Prostate gland (tissue), 2 donors: ENCODE measurements at regions of chr6 and their contacts with region 1.

Region 1: DNA sequence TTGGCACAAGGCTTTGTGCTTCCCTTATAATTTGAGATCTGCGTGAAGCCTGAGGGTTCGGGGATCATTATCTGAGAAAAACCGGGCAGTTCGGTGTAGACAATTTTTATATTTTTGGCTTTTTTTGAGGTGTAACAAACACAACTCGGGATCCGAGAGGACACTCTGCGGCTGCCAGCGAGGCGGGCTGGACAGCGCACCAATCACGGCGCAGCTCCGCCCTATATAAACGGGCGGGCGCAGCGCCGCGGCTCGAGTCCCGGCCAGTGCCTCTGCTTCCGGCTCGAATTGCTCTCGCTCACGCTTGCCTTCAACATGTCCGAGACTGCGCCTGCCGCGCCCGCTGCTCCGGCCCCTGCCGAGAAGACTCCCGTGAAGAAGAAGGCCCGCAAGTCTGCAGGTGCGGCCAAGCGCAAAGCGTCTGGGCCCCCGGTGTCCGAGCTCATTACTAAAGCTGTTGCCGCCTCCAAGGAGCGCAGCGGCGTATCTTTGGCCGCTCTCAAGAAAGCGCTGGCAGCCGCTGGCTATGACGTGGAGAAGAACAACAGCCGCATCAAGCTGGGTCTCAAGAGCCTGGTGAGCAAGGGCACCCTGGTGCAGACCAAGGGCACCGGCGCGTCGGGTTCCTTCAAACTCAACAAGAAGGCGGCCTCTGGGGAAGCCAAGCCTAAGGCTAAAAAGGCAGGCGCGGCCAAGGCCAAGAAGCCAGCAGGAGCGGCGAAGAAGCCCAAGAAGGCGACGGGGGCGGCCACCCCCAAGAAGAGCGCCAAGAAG is 69.0 kb downstream of the HFE start:
- DNase-seq: peak; percentile 93
- H3K4me3 ChIP-seq: peak overlapping the region; percentile 81 to 83
- H3K27ac ChIP-seq: peak overlapping the region; percentile 95 to 96
- H3K4me1 ChIP-seq: no peaks in the 10 kb centered on the region
- H3K27me3 ChIP-seq: no peaks in the 10 kb centered on the region
- CTCF ChIP-seq: peak in 1 of 4 experiments; percentile 3
- POLR2A ChIP-seq: peak; percentile 97

Region 2: DNA sequence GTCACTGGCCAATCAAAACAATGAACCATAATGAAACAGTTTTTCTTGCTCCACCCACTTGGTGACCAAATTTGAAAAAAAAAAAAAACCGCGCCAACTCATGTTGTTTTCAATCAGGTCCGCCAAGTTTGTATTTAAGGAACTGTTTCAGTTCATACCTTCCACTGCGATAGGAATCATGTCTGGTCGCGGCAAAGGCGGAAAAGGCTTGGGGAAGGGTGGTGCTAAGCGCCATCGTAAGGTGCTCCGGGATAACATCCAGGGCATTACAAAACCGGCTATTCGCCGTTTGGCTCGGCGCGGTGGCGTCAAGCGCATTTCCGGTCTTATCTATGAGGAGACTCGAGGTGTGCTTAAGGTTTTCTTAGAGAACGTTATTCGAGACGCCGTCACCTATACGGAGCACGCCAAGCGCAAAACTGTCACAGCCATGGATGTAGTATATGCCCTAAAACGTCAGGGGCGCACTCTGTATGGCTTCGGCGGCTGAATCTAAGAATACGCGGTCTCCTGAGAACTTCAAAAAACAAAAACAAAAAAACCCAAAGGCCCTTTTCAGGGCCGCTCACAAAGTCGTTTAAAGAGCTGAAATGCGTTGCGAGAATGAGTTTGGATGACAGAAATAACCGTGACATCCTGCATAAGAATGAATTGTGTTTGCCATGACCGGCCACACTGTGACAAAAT is 52.4 kb before region 1 on chr6:
- intact Hi-C with region 1: loop called (anchors 10 kb)
- DNase-seq: peak; percentile 95
- H3K4me3 ChIP-seq: peak overlapping the region; percentile 29 to 44
- H3K27ac ChIP-seq: peak overlapping the region; percentile 78 to 86
- H3K4me1 ChIP-seq: no peaks in the 10 kb centered on the region
- H3K27me3 ChIP-seq: no peaks in the 10 kb centered on the region
- CTCF ChIP-seq: peak in 2 of 4 experiments; percentile 41 to 49
- POLR2A ChIP-seq: peak; percentile 92

Region 3: DNA sequence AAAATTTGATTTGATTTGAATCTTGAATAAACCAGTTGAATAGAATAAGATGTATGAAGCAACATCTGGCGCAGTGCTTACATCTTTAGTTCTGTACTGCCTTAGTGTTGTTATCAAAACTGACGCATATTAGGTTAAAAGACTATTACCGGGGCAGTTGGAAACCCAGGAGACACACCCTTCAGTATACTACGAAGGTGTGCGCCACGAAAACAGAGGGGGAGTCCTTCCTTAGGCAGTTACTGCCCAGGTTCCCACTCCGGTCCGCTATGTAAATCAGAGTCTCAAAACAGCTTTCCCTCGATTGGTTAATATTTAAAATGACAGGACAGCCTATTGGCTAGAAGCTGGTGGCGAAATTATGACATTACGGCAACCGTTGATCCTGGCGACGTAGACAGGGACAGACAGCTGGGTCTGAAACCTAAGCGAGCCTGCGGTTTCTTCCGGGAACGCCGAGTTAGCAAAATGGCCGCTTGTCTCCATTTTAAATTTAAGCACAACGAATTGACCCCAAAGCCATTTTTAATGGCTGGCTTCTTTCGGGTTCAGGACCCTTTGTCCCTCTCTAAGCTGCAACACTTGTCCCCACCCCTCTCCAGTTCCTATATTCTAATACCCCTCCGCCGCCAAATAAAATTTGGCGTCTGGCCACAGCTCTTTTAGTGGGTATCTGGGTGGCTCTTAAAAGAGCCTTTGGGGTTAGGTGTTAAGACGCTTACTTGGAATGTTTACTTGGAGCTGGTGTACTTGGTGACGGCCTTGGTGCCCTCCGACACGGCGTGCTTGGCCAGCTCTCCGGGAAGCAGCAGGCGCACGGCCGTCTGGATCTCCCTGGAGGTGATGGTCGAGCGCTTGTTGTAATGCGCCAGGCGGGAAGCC is 33.2 kb before region 1 on chr6:
- intact Hi-C with region 1: loop called (anchors 1 kb)
- DNase-seq: peak; percentile 98
- H3K4me3 ChIP-seq: peak overlapping the region; percentile 81 to 85
- H3K27ac ChIP-seq: peak overlapping the region; percentile 91 to 95
- H3K4me1 ChIP-seq: peaks cover 2% of the 10 kb centered on the region
- H3K27me3 ChIP-seq: no peaks in the 10 kb centered on the region
- CTCF ChIP-seq: peak in 1 of 4 experiments; percentile 11
- POLR2A ChIP-seq: peak; percentile 36

Region 4: DNA sequence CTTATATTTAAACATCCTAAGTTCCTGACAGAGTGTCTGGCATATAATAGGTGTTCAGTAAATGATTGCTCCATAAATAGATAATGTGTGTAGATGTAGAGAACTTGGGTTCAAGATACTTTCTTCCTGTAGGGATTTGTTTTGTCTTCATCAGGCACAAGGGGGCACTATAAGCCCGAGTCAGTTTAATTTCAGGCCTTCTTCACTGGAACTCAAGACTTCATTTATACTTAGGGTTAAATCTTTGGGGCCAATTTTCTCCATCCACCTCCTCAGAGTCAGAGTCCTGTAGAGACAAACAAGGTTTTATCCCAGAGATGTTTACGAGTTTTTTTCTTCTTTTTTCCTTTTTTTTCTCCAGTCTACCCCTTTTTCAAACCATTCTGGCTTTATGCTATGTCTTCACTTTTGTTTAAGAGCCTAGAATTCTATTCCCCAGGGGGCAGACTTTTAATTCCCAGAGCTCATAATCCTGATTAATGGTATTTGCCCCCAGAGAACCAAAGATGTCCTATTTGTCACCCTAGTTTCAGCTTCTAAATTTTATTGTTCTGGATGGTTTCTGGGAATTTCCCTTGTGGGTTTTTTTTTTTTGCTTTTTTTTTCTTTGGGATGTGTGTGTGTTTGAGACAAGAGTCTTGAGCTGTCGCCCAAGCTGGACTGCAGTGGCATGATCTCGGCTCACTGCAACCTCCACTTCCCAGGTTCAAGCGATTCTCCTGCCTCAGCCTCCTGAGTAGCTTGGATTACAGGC is 19.3 kb after region 1 on chr6:
- intact Hi-C with region 1: loop called (anchors 1 kb)
- DNase-seq: no peak
- H3K4me3 ChIP-seq: no peak overlapping the region
- H3K27ac ChIP-seq: no peak overlapping the region
- H3K4me1 ChIP-seq: no peaks in the 10 kb centered on the region
- H3K27me3 ChIP-seq: no peaks in the 10 kb centered on the region
- CTCF ChIP-seq: peak in 3 of 4 experiments; percentile 43 to 62 (median 59)
- POLR2A ChIP-seq: no peak

Region 5: DNA sequence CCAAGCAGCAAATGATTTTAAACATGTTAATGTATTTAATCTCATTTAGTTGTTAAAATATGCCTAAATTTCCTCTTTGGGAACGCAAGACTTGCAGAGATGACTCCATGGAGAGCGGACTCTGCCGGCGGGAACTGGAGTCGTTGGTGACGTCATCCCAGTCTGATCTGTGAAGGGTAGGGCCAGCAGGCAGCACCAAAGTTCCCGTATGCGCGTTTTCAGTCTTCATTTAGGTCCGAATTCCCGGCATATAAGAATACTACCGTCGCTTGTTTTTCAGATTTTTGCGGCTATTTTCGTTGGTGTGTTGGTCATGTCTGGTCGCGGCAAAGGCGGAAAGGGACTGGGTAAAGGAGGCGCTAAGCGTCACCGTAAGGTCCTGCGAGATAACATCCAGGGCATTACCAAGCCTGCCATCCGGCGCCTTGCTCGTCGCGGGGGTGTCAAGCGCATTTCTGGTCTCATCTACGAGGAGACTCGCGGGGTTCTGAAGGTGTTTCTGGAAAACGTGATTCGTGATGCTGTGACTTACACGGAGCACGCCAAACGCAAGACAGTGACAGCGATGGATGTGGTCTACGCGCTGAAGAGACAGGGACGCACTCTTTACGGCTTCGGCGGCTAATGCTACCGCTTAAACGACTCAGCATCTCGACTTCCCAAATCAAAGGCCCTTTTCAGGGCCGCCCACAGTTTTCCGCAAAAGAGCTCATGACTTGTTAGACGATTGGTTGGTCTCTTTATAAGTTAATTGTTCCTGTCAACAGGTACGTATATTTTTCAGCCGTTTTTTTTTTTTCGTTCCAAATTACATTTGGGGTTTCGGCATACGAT is 48.3 kb after region 1 on chr6:
- intact Hi-C with region 1: loop called (anchors 5 kb)
- DNase-seq: peak; percentile 99
- H3K4me3 ChIP-seq: peak overlapping the region; percentile 53 to 62
- H3K27ac ChIP-seq: peak overlapping the region; percentile 81 to 89
- H3K4me1 ChIP-seq: no peaks in the 10 kb centered on the region
- H3K27me3 ChIP-seq: no peaks in the 10 kb centered on the region
- CTCF ChIP-seq: peak in 3 of 4 experiments; percentile 15 to 74 (median 30)
- POLR2A ChIP-seq: peak; percentile 82

Region 6: DNA sequence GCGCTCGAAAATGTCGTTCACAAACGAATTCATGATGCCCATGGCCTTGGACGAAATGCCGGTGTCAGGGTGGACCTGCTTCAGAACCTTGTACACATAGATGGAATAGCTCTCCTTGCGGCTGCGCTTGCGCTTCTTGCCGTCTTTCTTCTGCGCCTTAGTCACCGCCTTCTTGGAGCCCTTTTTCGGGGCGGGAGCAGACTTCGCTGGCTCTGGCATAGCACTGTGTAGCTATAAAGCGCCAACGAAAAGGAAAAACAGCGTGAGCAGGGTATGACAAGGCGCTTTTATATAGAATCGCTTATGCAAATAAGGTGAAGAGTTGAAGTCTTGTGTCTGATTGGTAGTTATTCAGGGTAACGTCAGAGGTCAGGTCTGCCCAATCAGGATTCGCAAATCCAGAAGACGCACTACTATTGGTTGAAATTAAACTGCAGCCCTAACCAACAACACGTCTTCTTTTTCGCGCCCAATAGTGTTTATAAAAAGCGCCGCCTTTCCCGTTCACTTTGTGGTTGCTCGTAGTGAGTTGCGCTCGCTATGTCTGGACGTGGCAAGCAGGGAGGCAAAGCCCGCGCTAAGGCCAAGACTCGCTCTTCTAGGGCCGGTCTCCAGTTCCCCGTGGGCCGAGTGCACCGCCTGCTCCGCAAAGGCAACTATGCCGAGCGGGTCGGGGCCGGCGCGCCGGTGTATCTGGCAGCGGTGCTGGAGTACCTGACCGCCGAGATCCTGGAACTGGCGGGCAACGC is 976.4 kb after region 1 on chr6:
- intact Hi-C with region 1: loop called (anchors 10 kb)
- DNase-seq: peak; percentile 95
- H3K4me3 ChIP-seq: peak overlapping the region; percentile 48 to 49
- H3K27ac ChIP-seq: peak overlapping the region; percentile 85 to 90
- H3K4me1 ChIP-seq: no peaks in the 10 kb centered on the region
- H3K27me3 ChIP-seq: no peaks in the 10 kb centered on the region
- CTCF ChIP-seq: peak in 1 of 4 experiments; percentile 4
- POLR2A ChIP-seq: peak; percentile 92